ENCODE measurements at regions of chrX and their contacts with region 1.

Region 1: DNA sequence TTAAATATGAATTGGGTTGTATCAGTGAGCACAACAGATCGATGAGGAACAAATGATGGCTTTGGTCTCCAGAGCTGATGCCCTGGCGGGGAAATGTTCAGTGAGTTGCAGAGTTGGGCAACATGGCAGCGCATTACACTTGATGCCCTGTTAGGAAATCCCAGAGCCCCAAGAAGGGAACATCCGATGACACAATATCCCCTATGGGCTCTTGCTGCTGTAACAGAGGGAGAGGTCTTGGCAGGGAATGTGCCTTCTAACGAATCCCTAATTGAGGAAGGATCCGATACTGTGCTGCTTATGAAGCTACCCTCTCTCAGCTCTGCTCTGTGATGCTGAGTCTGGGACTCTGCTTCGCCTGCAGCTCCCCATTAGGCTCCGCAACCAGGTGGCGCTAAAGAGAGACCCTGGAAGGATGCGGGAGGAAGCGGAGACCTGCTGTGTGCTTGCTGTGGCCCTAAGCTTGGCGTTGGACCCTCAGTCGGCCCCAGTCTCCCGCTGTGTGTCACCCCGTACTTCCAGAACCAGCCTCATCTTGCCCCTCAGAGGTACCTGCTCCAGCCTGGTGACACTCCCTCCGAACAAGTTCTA is 38.9 kb downstream of the PDHA1 start:
- DNase-seq: peak; percentile 54
- ATAC-seq: peak; percentile 52

Region 2: DNA sequence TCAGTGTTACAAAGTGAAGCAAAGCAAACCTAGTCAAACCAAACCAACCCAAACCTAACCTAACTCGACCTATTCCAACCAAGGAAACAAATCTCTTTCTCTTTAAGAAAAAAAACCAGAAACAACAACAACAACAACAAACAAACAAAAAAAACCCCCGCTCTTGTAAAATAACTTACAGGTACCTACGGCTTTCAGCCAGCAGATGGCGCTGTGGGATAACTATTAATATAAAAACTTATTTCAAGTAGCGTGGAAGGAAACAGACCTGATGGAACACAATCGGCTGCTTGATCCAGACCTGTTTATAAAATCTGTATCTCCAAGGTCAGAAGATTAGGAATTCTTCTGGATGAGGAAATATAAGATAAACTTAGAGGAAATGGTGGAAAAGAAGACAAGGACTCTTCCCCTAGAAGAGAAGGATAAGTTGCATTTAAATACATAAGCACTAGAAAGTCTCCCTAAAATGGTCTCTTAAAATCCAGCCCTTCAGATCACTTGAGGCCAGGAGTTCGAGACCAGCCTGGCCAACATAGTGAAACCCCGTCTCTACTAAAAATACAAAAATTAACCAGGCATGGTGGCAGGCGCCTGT is 991.6 kb before region 1 on chrX:
- intact Hi-C with region 1: no loop called
- DNase-seq: peak; percentile 69
- ATAC-seq: no peak

Region 3: DNA sequence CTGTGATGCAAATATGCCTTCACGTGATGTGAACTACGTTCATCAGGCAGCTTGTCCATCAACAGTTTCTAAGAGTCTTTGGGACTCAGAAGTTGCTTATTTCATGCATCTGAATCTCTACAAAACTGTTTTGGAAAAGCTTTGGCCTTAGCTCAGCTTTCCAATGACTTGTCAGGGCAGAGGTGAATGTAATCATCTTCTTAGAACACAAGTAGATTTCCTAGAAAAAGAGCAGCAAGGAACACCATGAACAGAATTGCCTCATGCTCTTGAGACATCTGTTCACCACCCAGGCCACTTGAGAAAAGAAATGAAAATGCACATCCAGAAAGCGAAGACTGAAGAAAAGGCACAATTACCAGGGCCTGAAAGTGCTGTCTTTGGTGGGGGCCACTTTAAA is 144.7 kb before region 1 on chrX:
- intact Hi-C with region 1: no loop called
- DNase-seq: no peak
- ATAC-seq: peak; percentile 18

Region 4: DNA sequence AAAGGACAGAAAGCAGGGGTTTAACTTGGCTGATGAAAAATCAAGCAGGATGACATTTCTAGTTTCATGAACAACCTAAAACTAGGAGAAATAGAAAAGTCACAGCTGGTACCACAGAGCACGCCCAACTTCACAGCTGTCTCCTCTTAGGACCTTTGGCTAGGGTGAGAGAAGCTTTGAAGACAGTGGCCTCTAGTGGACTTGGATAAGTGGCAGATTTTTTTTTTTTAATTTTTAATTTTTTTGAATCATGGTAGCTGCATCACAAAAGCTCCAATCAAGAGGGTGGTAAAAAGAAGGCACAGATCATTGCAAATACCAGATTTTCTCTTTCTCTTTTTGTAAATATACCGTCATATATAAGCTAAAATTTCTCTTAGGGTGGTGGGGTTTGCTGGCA is 152.8 kb after region 1 on chrX:
- intact Hi-C with region 1: loop called (anchors 10 kb)
- DNase-seq: no peak
- ATAC-seq: no peak

Region 5: GRCh38 chrX:19990556-19991349 is 608.1 kb after region 1 on chrX and contains the start of gene BCLAF3:
- intact Hi-C with region 1: no loop called
- DNase-seq: peak; percentile 93
- ATAC-seq: peak; percentile 99
- total RNA-seq, gene BCLAF3: 6.5 TPM

Measured in Right ventricle myocardium superior (tissue), 1 donor.